ENCODE measurements at regions of chr3 and their contacts with region 1.

Region 1: DNA sequence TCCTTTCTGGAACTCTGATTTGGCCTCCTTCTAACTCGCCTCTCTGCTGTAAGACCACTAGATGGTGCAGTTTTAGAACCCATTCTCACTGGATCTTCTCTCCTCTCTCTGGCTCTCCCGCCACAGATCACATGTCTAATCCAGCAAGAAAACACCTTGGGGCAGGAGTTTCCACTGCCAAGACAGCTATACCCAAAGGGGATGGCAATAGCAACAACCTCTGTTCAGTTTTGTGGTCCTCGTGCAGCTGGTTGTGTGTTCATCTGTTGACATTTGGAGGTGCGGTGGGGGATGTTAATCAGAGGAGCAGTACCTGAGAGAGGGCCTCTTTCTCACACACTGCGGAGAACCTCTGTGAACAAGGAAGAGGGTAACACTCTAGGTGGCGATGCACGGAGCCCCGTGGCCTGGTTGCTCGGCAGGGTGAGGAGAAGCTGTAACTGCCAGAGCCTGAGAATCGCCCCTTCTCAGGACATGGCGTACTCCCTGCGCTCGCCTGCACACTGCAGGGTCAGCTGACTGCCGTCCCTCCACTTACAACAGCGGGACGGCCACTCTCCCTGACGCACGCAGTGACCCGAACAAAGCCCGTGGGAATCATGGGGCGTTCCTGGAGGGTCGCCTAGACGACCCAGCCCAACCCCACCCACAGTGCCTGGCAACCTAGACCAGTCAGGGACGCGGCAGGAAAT is at the start of gene TEX55:
- DNase-seq: peak; percentile 78
- H3K4me3 ChIP-seq: no peak within 1 kb of the TSS
- H3K27ac ChIP-seq: no peak within 1 kb of the TSS
- H3K4me1 ChIP-seq: peaks cover 14% of the 10 kb centered on the region
- H3K27me3 ChIP-seq: no peaks in the 10 kb centered on the region
- total RNA-seq, gene TEX55: not detected in 2 replicates

Region 2: GRCh38 chr3:119240591-119241434 is 95.2 kb after region 1 on chr3 and contains the start of gene B4GALT4:
- in situ Hi-C with region 1: loop called (anchors 10 kb)
- DNase-seq: peak; percentile 98
- H3K4me3 ChIP-seq: peak within 1 kb of the TSS; percentile 81
- H3K27ac ChIP-seq: peak within 1 kb of the TSS; percentile 77
- H3K4me1 ChIP-seq: peaks cover 36% of the 10 kb centered on the region
- H3K27me3 ChIP-seq: no peaks in the 10 kb centered on the region
- total RNA-seq, gene B4GALT4: 55.6 and 56.0 TPM in 2 replicates

Region 3: DNA sequence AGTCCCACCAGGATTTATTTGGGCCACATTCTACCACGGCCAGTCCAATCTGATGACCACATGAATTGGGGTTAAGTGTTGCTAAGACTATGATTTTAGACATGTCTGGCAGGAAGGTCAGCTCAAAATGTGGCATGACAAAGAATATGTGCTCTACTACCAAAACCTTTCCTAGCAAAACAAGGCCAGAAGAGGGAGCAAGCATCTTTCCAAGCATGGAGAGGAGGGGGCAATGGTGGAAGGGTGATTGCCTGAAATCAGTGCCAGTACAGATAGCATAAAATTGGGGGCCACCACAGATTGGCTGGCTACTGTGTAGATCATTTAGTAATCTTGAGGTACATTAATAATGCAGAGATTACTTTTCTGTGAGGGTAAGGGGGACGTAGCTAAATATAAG is 274.6 kb after region 1 on chr3:
- in situ Hi-C with region 1: no loop called
- DNase-seq: no peak
- H3K4me3 ChIP-seq: no peak overlapping the region
- H3K27ac ChIP-seq: no peak overlapping the region
- H3K4me1 ChIP-seq: no peaks in the 10 kb centered on the region
- H3K27me3 ChIP-seq: no peaks in the 10 kb centered on the region

Region 4: GRCh38 chr3:120129718-120130513 is 984.3 kb after region 1 on chr3:
- in situ Hi-C with region 1: no loop called
- DNase-seq: peak; percentile 66
- H3K4me3 ChIP-seq: no peak overlapping the region
- H3K27ac ChIP-seq: no peak overlapping the region
- H3K4me1 ChIP-seq: peaks cover 9% of the 10 kb centered on the region; the same call in 1 of the 2 replicates
- H3K27me3 ChIP-seq: no peaks in the 10 kb centered on the region

Measured in GM23248 (cell line).